ENCODE measurements at regions of chr11 and their contacts with region 1.

Region 1: GRCh38 chr11:207208-207862 is at the starts of genes BET1L and RIC8A:
- DNase-seq: peak; percentile 98
- H3K4me3 ChIP-seq: peak within 1 kb of the TSS; percentile 73
- H3K4me3 Mint-ChIP-seq: peak within 1 kb of the TSS; percentile 92
- H3K27ac Mint-ChIP-seq: peak within 1 kb of the TSS; percentile 99
- H3K4me1 ChIP-seq: peaks cover 20% of the 10 kb centered on the region
- H3K4me1 Mint-ChIP-seq: peaks cover 6% of the 10 kb centered on the region
- H3K27me3 ChIP-seq: no peaks in the 10 kb centered on the region
- H3K27me3 Mint-ChIP-seq: no peaks in the 10 kb centered on the region
- CTCF ChIP-seq: no peak
- total RNA-seq, gene BET1L: 56.8 and 57.4 TPM in 2 replicates
- total RNA-seq, gene RIC8A: 97.1 and 111 TPM in 2 replicates

Region 2: DNA sequence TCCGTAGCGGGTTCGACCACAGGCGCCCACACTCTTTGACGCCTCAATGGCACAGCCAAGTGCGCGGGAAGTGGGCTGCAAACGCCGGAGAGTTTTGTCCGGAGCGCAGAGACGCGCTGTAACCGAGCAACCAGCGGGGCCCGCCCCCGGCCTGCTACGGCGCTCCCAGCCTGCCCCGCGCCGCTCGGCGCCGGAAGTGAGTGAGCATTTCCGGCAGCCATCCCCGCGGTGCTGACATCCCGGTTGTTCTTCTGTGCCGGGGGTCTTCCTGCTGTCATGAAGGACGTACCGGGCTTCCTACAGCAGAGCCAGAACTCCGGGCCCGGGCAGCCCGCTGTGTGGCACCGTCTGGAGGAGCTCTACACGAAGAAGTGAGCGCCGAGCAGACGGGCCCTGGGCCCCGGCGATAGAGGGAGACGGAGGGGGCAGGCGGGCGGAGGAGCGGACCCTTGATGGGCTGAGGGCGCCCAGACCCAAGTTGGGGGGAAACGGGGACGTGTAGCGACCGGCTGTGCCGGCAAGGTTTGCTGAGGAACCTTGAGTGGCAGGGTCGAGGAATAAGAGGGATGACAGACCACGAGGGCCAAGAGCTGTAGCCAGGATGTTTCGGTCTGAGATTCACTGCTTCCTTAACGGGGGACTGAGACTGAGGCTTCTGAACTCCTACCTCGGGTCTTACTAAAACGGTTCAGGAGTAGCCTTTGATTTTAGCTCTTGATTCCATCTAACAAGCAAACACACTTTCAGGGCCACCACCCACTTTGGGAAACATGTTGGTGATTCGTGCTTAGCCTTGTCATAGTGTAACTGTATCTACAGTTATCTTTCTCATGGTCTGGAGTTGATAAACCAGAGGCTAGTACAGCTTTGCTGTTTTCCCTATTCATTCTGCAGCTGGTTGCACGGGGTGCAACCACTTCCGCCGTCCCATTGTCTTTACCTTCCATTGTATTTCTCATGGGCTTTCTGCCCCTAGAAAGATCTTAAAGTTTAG is 29.7 kb after region 1 on chr11 and contains the start of gene PSMD13:
- CTCF ChIA-PET with region 1: interaction called, 3 read pairs
- POLR2A ChIA-PET with region 1: interaction called, 10 read pairs
- intact Hi-C with region 1: loop called (anchors 2 kb)
- DNase-seq: peak; percentile 77 to 89
- H3K4me3 ChIP-seq: peak within 1 kb of the TSS; percentile 88
- H3K4me3 Mint-ChIP-seq: peak within 1 kb of the TSS; percentile 81
- H3K27ac Mint-ChIP-seq: peak within 1 kb of the TSS; percentile 89
- H3K4me1 ChIP-seq: peaks cover 8% of the 10 kb centered on the region; the same call in 1 of the 2 replicates
- H3K4me1 Mint-ChIP-seq: no peaks in the 10 kb centered on the region
- H3K27me3 ChIP-seq: no peaks in the 10 kb centered on the region
- H3K27me3 Mint-ChIP-seq: no peaks in the 10 kb centered on the region
- CTCF ChIP-seq: no peak
- total RNA-seq, gene PSMD13: 162 and 172 TPM in 2 replicates

Region 3: GRCh38 chr11:662689-663274 is 455.4 kb after region 1 on chr11:
- CTCF ChIA-PET with region 1: no interaction called
- POLR2A ChIA-PET with region 1: no interaction called
- intact Hi-C with region 1: no loop called
- DNase-seq: peak in 1 of 2 experiments; percentile 65
- H3K4me3 ChIP-seq: no peak overlapping the region
- H3K4me3 Mint-ChIP-seq: no peak overlapping the region
- H3K27ac Mint-ChIP-seq: no peak overlapping the region
- H3K4me1 ChIP-seq: no peaks in the 10 kb centered on the region
- H3K4me1 Mint-ChIP-seq: no peaks in the 10 kb centered on the region
- H3K27me3 ChIP-seq: no peaks in the 10 kb centered on the region
- H3K27me3 Mint-ChIP-seq: no peaks in the 10 kb centered on the region
- CTCF ChIP-seq: peak; percentile 72 to 78

Measured in Caco-2 (cell line).